ENCODE measurements at regions of chr2 and their contacts with region 1.

Region 1: GRCh38 chr2:218395797-218396687 is 3.6 kb upstream of the CTDSP1 start:
- DNase-seq: peak; percentile 97
- ATAC-seq: peak; percentile 68
- H3K4me3 Mint-ChIP-seq: peak overlapping the region; percentile 85
- H3K27ac Mint-ChIP-seq: peak overlapping the region; percentile 92
- H3K4me1 Mint-ChIP-seq: peaks cover 29% of the 10 kb centered on the region
- H3K27me3 Mint-ChIP-seq: peaks cover 6% of the 10 kb centered on the region

Region 2: DNA sequence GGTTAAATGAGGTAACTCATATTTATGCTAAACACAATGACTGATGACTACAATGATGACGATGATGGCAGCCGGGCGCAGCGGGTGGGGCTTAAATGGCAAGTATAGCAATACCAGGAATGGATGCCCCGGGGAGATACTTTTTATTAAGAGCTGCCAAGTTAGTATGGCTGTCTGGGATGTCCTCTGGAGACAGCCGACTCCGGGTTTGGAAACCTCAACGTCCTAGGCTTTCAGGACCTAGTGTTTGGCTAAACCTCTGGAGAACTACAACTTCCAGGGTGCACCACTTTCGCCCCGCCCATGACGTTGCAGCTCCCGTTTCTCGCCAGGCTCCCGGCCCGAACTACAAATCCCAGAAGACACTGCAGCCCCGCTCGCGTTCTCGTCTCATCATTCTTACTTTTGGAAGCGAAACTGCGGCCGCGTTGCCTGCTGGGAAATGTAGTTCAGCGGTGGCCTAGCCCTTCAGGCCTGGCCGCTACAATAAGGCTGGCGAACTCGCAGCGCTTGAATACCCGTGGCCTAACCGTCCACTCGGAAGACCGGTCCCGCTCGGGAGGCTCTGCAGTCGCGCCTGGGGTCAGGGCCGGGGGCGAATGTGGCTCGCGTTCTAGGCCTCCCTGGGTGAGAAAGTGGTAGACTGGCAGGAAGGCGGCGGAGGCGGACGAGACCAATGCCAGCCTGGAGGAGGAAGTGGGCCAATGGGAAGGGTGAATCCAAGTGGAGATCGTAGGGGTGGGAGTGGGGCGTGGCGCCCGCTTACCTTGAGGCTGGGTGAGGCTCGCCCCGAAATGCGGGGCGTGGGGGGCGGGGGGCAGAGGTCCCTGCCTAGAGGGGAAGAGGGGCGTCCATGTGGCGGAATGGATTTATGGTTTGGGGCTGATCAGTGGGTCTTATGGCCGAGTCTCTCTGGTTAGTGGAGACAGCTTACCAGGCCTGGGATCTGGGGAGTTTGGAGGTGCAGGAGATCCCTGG is 1983.7 kb before region 1 on chr2 and contains the start of gene SMARCAL1:
- CTCF ChIA-PET with region 1: no interaction called
- POLR2A ChIA-PET with region 1: no interaction called
- intact Hi-C with region 1: loop called in 1 of 2 experiments (anchors 2 kb)
- DNase-seq: peak; percentile 100
- ATAC-seq: peak; percentile 93
- H3K4me3 Mint-ChIP-seq: peak within 1 kb of the TSS; percentile 94
- H3K27ac Mint-ChIP-seq: peak within 1 kb of the TSS; percentile 93
- H3K4me1 Mint-ChIP-seq: peaks cover 13% of the 10 kb centered on the region
- H3K27me3 Mint-ChIP-seq: no peaks in the 10 kb centered on the region
- total RNA-seq, gene SMARCAL1: 25.9 to 27.7 TPM

Region 3: GRCh38 chr2:218286570-218287459 is 109.2 kb before region 1 on chr2:
- CTCF ChIA-PET with region 1: interaction called, 4 read pairs
- POLR2A ChIA-PET with region 1: interaction called, 5 read pairs
- intact Hi-C with region 1: loop called (anchors 1 to 5 kb)
- DNase-seq: peak; percentile 91
- ATAC-seq: peak; percentile 74
- H3K4me3 Mint-ChIP-seq: peak overlapping the region; percentile 80
- H3K27ac Mint-ChIP-seq: peak overlapping the region; percentile 99
- H3K4me1 Mint-ChIP-seq: peaks cover 88% of the 10 kb centered on the region
- H3K27me3 Mint-ChIP-seq: no peaks in the 10 kb centered on the region

Region 4: DNA sequence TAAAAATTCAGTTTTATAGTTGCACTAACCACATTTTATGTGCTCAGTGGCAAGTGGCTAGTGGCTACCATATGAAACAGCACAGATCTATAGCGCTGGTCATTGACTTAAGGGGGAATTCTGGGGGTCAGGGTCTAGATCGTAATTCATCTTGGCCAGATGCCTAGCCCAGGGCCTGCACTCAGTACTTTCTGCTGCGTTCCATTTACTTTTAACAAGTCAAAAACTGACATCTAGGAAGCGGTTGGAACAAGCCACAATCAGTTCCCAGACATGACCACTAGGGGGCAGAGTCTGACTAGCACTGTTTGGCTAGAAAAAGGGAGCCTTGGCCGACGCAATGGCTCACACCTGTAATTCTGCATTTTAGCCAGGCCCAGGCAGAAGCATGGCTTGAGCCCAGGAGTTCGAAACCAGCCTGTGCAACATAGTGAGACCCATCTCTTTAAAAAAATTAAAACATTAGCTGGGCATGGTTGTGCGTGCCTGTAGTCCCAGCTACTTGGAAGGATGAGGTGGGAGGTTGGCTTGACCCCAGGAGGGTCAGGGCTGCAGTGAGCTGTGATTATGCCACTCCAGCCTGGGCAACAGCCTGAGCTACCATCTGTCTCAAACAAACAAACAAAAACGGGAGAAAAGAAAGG is 94.7 kb before region 1 on chr2:
- CTCF ChIA-PET with region 1: interaction called, 20 read pairs
- POLR2A ChIA-PET with region 1: no interaction called
- intact Hi-C with region 1: loop called (anchors 1 kb)
- DNase-seq: peak; percentile 93
- ATAC-seq: peak; percentile 95
- H3K4me3 Mint-ChIP-seq: no peak overlapping the region
- H3K27ac Mint-ChIP-seq: no peak overlapping the region
- H3K4me1 Mint-ChIP-seq: peaks cover 7% of the 10 kb centered on the region
- H3K27me3 Mint-ChIP-seq: no peaks in the 10 kb centered on the region

Region 5: DNA sequence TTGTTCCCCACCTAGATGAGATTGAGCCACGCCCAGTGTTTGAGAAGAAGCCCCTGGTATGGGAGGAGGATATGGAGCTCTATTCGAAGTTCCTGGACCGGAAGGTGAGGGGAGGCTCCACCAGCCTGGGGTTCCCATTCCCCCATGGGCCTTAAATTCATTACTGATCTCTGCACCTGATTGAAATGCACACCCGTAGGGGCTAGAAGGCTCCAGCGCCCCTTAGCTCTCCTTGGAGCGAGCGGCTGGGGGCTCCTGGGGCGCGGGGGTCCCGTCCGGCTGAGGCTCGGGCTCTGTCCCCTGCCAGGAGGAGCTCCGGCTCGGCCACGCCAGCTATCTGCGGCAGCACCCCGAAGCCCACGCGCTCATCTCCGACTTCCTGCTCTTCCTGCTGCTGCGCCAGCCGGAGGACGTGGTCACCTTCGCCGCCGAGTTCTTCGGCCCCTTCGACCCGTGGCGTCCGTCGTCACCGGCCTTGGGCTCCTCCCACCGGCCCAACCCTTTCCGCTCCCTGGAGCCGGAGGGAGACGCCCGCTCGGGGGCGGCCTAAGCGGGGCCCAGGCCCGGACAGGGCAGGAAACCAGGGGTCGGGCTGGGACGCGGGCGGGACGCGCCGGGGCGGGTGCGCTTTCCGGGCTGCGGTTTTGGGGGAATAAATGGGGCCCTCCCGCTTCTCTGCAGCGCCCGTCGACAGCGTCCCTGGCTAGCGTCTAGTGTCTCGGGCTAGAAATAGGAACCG is 28.5 kb before region 1 on chr2:
- CTCF ChIA-PET with region 1: interaction called, 5 read pairs
- POLR2A ChIA-PET with region 1: no interaction called
- intact Hi-C with region 1: loop called in 1 of 2 experiments (anchors 1 kb)
- DNase-seq: peak; percentile 80
- ATAC-seq: peak; percentile 96
- H3K4me3 Mint-ChIP-seq: peak overlapping the region; percentile 72
- H3K27ac Mint-ChIP-seq: peak overlapping the region; percentile 67
- H3K4me1 Mint-ChIP-seq: peaks cover 20% of the 10 kb centered on the region
- H3K27me3 Mint-ChIP-seq: no peaks in the 10 kb centered on the region

Region 6: DNA sequence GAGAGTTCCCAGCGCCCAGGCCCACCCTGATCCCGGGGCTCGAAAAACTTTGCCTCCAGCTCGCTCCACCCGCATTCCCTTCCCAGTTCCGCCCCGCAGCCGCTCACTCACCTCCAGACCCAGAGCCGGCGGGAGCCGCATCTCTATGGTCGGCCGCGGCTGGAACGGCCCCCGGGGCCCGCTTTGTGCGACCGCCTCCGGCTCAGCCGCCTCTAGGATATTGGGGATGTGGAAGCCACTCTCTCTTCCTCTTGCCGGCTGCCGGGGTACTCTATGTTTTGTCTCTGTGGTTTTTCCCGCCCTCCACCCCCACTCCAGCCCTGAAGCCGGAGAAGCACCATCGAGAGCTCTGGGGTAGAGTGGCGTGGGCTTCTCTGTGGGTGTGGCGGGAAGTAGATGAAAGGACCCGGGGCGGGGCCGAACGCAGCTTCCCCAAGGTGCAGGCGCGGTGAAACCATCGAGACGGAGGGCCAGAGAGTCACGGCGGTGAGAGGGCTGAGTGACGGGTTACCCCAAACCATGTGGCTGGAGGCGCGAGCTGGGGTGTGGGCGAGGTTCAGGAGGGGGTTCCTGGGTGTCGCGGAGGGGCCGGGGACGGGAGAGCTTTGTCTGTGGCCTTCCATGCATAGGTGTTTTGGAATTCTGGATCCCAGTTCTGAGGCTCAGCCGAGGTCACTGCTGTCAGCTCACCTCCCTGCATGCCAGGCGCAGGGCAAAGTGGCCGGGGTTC is 263.4 kb after region 1 on chr2 and contains the starts of genes BCS1L and ZNF142:
- CTCF ChIA-PET with region 1: no interaction called
- POLR2A ChIA-PET with region 1: no interaction called
- intact Hi-C with region 1: loop called in 1 of 2 experiments (anchors 1 kb)
- DNase-seq: peak; percentile 98
- ATAC-seq: peak; percentile 95
- H3K4me3 Mint-ChIP-seq: peak within 1 kb of the TSS; percentile 88
- H3K27ac Mint-ChIP-seq: peak within 1 kb of the TSS; percentile 89
- H3K4me1 Mint-ChIP-seq: peaks cover 35% of the 10 kb centered on the region
- H3K27me3 Mint-ChIP-seq: no peaks in the 10 kb centered on the region
- total RNA-seq, gene BCS1L: 74.3 to 92.3 TPM
- total RNA-seq, gene ZNF142: 31.5 to 42.4 TPM

Region 7: GRCh38 chr2:218908721-218909619 is 512.9 kb after region 1 on chr2:
- CTCF ChIA-PET with region 1: no interaction called
- POLR2A ChIA-PET with region 1: no interaction called
- intact Hi-C with region 1: loop called in 1 of 2 experiments (anchors 1 kb)
- DNase-seq: peak; percentile 97
- ATAC-seq: peak; percentile 98
- H3K4me3 Mint-ChIP-seq: peak overlapping the region; percentile 85
- H3K27ac Mint-ChIP-seq: peak overlapping the region; percentile 83
- H3K4me1 Mint-ChIP-seq: peaks cover 13% of the 10 kb centered on the region
- H3K27me3 Mint-ChIP-seq: peaks cover 16% of the 10 kb centered on the region